ENCODE measurements at regions of chr7 and their contacts with region 1.

Region 1: GRCh38 chr7:55065079-55065478 is 46.3 kb downstream of the EGFR start:
- DNase-seq: peak; percentile 88

Region 2: DNA sequence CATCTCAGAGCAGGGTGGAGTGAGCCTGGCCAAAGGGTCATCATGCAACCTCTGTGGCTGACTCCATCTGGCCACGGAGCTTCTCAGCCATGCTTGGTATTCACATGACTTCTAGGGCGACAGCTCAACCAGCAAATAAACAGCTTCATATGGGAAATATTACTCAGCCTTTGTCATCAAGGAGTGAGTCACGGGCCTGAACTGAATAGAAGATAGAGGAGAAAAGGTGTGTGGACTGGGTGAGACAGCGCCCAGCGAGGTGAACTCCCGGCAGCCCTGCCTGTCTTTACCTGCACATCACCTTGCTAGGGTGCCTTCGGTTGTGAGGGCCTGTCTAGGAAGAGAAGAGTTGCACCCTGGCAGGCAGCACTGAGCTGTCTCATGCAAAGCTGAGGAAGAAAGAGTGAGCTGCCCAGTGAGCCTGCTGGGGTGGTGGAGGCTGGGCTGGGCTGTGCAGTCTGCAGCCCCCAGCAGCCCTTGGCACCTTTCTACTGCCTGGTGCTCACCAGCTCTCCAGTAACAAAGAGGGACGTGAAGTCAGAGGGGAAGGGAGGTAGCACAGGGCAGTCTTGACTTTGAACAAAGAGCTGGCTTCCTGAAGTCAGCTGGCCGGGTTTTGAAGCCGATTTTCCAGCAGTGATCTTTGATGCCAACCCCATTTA is 67.9 kb after region 1 on chr7:
- in situ Hi-C with region 1: loop called (anchors 10 kb)
- DNase-seq: peak; percentile 99

Region 3: DNA sequence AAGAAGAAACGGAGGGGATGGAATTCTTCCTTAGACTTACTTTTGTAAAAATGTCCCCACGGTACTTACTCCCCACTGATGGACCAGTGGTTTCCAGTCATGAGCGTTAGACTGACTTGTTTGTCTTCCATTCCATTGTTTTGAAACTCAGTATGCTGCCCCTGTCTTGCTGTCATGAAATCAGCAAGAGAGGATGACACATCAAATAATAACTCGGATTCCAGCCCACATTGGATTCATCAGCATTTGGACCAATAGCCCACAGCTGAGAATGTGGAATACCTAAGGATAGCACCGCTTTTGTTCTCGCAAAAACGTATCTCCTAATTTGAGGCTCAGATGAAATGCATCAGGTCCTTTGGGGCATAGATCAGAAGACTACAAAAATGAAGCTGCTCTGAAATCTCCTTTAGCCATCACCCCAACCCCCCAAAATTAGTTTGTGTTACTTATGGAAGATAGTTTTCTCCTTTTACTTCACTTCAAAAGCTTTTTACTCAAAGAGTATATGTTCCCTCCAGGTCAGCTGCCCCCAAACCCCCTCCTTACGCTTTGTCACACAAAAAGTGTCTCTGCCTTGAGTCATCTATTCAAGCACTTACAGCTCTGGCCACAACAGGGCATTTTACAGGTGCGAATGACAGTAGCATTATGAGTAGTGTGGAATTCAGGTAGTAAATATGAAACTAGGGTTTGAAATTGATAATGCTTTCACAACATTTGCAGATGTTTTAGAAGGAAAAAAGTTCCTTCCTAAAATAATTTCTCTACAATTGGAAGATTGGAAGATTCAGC is 141.4 kb after region 1 on chr7:
- in situ Hi-C with region 1: no loop called
- DNase-seq: no peak

Measured in Caki2 (cell line).